ENCODE measurements at regions of chr17 and their contacts with region 1.

Region 1: GRCh38 chr17:17356149-17356930 is 53.2 kb downstream of the NT5M start:
- DNase-seq: peak; percentile 75 to 91 (median 89)
- ATAC-seq: peak; percentile 73 to 78
- H3K4me3 ChIP-seq: no peak overlapping the region
- H3K27ac ChIP-seq: no peak overlapping the region
- H3K4me1 ChIP-seq: no peaks in the 10 kb centered on the region
- H3K27me3 ChIP-seq: no peaks in the 10 kb centered on the region

Region 2: DNA sequence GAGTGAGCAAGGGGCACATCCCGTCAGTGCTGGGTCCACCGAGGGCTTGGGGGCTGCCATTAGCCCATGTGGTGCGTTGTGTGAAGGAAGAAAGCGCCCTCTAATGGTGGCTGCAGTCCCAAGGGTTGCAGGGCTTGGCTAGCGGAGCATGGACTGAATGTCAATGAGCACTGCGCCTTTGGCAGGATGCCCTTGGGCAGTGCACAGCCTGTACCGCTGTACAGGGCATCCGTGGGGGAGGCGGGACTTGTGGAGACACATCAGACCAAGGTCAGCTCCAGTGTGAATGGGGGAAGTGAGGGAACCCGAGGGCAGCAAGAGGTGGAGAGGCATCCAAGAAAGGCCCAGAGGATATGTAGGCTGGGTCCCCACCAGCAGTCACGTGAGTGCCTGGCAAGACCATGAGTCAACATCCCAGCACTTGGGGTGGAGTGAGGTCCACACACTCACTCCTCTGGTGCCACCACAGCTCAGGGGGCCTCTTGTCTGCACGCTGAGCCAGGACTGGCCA is 45.0 kb after region 1 on chr17:
- intact Hi-C with region 1: no loop called
- DNase-seq: no peak
- ATAC-seq: no peak
- H3K4me3 ChIP-seq: no peak overlapping the region
- H3K27ac ChIP-seq: no peak overlapping the region
- H3K4me1 ChIP-seq: peaks cover 3% of the 10 kb centered on the region
- H3K27me3 ChIP-seq: no peaks in the 10 kb centered on the region

Region 3: DNA sequence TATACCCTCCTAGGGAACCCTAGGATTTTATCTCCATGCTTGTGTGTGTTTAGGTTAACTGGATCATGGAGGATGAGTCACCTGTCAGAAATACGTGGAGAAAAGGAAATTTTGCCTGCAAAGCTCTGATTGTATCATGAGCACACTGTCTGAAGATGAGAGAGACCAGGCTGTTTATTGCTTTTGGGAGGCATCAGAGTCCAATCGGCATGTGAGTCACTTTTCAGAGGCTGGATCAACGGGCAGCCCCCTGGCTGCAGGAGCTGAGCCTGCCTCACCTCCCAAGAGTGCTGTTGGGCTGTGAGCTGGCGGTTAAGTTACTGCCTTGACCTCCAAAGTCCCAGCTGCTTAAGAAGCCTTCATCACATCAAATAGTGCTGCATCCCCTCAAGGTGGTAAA is 79.0 kb after region 1 on chr17:
- intact Hi-C with region 1: loop called in 1 of 4 experiments (anchors 2 kb)
- DNase-seq: no peak
- ATAC-seq: no peak
- H3K4me3 ChIP-seq: no peak overlapping the region
- H3K27ac ChIP-seq: no peak overlapping the region
- H3K4me1 ChIP-seq: no peaks in the 10 kb centered on the region
- H3K27me3 ChIP-seq: no peaks in the 10 kb centered on the region

Region 4: DNA sequence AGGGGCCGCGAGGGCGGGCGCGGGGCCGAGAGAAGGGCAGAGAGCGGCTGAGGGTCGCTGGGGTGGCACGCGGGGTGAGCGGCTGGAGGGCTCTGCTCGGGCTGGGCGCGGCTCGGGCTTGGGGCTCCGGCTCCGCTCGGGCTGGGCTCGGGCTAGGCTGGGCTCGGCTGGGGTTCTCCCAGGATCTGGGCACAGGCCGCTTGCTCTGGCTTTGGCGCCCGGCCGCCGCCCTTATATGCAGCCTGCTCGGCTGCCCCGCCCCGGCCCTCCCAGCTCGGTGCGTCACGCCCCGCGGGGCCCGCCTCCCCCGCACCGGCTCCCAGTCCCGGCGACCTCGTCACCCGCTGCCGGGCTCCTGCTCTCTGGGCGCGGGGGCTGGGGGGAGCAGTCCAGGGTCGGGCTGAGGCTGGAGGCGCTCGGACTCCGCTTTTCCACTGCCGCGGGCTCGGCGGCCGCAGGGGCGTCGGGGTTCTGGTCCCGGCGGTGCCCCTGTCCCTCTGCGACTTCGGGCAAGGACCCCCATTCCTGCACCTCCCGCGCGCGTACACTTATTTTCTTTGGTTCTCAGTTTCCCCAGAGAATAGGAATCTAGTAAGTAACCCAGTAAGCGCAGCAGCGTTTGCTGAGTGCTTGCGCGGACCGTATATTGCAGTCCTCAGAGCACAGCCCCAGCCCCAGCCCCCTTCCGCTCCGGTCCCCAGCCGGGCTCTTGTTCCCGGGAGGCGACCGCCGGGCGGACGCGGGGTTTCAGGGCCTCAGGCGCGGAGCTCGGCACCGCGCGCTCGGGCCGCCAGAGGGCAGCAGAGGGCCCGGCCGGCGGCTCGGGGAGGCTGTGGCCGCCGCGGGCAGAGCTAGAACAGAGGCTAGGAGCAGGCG is 140.1 kb after region 1 on chr17 and contains the start of gene RASD1:
- intact Hi-C with region 1: loop called in 3 of 4 experiments (anchors 2 to 10 kb)
- DNase-seq: peak; percentile 94 to 98 (median 97)
- ATAC-seq: peak; percentile 93
- H3K4me3 ChIP-seq: peak within 1 kb of the TSS; percentile 64
- H3K27ac ChIP-seq: peak within 1 kb of the TSS; percentile 87
- H3K4me1 ChIP-seq: peaks cover 7% of the 10 kb centered on the region
- H3K27me3 ChIP-seq: no peaks in the 10 kb centered on the region
- total RNA-seq, gene RASD1: 18.7 to 63.8 (median 39.9) TPM

Region 5: GRCh38 chr17:17568749-17569195 is 212.4 kb after region 1 on chr17:
- intact Hi-C with region 1: loop called (anchors 1 to 10 kb)
- DNase-seq: peak; percentile 70 to 92 (median 89)
- ATAC-seq: peak in 1 of 2 donors; percentile 28
- H3K4me3 ChIP-seq: no peak overlapping the region
- H3K27ac ChIP-seq: peak overlapping the region; percentile 53
- H3K4me1 ChIP-seq: peaks cover 26% of the 10 kb centered on the region
- H3K27me3 ChIP-seq: no peaks in the 10 kb centered on the region

Region 6: DNA sequence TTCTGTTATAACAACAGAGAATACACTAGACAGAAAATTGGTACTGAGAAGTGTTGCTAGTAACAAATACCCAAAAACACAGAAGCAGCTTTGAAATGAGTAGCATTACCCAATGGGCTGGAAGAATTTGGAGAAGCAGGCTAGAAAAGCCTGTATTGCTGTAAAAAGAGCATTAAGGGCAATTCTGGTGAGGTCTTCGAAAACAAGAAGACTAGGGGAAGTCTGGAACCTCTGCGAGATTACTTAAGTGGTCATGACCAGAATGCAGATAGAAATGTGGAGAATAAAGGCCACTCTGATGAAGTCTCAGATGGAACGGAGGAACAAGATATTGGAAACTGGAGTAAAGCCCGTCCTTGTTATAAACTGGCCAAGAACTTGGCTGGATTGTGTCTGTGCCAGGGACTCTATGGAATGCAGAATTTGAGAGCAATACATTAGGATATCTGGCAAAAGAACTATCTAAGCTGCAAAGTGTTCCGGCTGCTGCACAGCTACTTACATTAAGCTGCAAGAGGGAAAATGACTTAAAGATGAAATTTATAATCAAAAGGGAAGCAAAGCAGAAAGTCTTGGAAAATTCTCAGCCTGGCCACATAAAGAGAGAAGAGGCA is 280.0 kb after region 1 on chr17:
- intact Hi-C with region 1: loop called in 1 of 4 experiments (anchors 5 kb)
- DNase-seq: no peak
- ATAC-seq: no peak
- H3K4me3 ChIP-seq: no peak overlapping the region
- H3K27ac ChIP-seq: no peak overlapping the region
- H3K4me1 ChIP-seq: no peaks in the 10 kb centered on the region
- H3K27me3 ChIP-seq: no peaks in the 10 kb centered on the region

Region 7: GRCh38 chr17:17641621-17642409 is 285.5 kb after region 1 on chr17:
- intact Hi-C with region 1: loop called (anchors 2 to 5 kb)
- DNase-seq: peak; percentile 76 to 87 (median 84)
- ATAC-seq: peak; percentile 84 to 88
- H3K4me3 ChIP-seq: no peak overlapping the region
- H3K27ac ChIP-seq: no peak overlapping the region
- H3K4me1 ChIP-seq: no peaks in the 10 kb centered on the region
- H3K27me3 ChIP-seq: no peaks in the 10 kb centered on the region

Measured in right cardiac atrium (tissue), 5 donors.